ENCODE measurements at regions of chr16 and their contacts with region 1.

Region 1: DNA sequence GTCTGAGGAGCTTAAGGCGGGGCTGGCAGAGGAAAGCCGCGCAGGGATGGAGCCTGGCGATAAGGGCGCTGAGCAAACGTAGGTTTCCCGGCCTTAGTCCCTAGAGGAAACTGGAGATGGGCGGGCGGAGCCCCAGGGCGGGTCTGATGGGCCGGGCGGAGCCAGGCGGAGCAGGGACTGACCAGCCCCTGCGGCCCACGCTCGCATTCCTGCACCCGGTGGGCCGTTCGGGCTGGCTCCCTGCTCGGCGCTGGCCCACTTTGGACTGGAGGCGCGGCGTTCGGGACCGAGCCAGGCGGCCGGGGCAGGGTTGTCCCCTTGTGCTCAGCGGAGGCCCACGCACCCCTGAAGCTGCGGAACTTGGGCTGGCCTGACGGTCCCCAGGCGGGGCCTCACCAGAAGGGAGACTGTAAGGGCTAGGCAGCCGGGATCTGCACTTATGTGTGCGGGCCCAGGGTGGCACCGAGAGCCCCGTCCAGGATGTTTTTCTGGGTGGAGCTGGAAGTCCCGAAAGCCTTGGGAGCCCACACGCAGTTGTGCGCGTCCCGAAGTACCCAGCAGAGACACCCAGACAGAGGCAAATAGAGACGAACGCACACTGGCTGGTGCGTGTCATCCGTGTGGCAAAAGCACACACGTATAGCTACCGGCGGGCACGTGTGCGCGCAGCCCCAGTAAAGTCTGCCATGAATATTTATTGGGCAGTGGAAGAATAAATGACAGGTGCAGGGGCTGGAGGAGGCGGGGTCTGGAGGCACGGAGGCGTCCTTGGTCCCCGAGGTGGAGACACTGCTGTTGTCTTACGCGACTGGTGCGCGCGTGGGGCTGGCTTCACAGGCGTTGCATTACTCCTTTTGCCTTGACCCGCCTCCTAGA is 1.4 kb downstream of the PYDC1 start:
- DNase-seq: no peak
- H3K4me3 Mint-ChIP-seq: peak overlapping the region; percentile 52
- H3K27ac Mint-ChIP-seq: no peak overlapping the region
- H3K4me1 Mint-ChIP-seq: peaks cover 15% of the 10 kb centered on the region
- H3K27me3 Mint-ChIP-seq: peaks cover 38% of the 10 kb centered on the region

Region 2: DNA sequence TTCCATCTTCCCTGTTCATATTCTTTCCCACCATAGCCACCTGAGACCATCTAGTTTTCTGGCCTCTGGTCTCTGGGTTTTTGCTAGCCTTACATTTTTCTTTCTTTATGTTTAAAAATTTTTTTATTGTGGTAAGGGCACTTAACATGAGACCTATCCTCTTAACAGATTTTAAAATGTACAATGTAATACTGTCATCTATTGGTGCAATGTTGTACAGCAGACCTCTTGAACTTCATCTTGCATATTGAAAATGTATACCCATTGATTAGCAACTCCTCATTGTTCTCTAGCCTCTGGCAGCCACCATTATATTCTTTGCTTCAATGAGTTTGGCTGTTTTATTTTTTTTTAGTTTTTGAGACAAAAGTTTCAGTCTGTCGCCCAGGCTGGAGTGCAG is 83.4 kb after region 1 on chr16:
- intact Hi-C with region 1: loop called (anchors 5 kb)
- DNase-seq: no peak
- H3K4me3 Mint-ChIP-seq: no peak overlapping the region
- H3K27ac Mint-ChIP-seq: no peak overlapping the region
- H3K4me1 Mint-ChIP-seq: peaks cover 11% of the 10 kb centered on the region
- H3K27me3 Mint-ChIP-seq: peaks cover 20% of the 10 kb centered on the region